HEK293 (cell line): ENCODE measurements at regions of chr15 and their contacts with region 1.

Region 1: DNA sequence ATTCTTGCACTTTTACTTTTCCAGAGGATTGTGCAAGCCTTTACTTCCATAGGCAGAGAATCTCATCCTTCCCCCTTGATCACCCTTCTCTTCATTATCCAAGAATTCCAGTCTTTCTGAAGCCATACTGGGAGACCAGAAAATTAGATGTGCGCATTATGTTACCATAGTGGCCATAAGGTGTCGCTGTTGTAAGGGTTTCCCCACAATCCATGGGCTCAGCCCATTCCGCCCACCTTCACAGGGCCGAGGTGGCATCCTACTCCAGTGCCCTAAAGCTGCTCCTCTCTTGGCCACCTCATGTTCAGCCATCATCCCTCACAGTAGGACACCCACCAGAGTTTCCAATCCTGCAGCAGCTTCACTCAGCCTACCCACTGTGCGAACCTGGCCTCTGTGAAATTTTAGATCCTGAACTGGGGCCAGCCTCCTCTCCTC is 35.0 kb downstream of the CTSH start:
- H3K4me3 ChIP-seq: no peak overlapping the region
- H3K27ac ChIP-seq: no peak overlapping the region
- H3K4me1 ChIP-seq: no peaks in the 10 kb centered on the region
- CTCF ChIP-seq: peak; percentile 58

Region 2: GRCh38 chr15:78822514-78822913 is 87.3 kb before region 1 on chr15:
- CTCF ChIA-PET with region 1: no interaction called
- POLR2A ChIA-PET with region 1: no interaction called
- H3K4me3 ChIP-seq: no peak overlapping the region
- H3K27ac ChIP-seq: no peak overlapping the region
- H3K4me1 ChIP-seq: no peaks in the 10 kb centered on the region
- CTCF ChIP-seq: no peak

Region 3: GRCh38 chr15:78872972-78873792 is 36.6 kb before region 1 on chr15:
- CTCF ChIA-PET with region 1: interaction called, 7 read pairs
- POLR2A ChIA-PET with region 1: interaction called, 10 read pairs
- H3K4me3 ChIP-seq: peak overlapping the region; percentile 79
- H3K27ac ChIP-seq: peak overlapping the region; percentile 100
- H3K4me1 ChIP-seq: peaks cover 18% of the 10 kb centered on the region
- CTCF ChIP-seq: peak; percentile 93

Region 4: GRCh38 chr15:78927077-78927784 is 17.4 kb after region 1 on chr15:
- CTCF ChIA-PET with region 1: interaction called, 24 read pairs
- POLR2A ChIA-PET with region 1: interaction called, 4 read pairs
- H3K4me3 ChIP-seq: no peak overlapping the region
- H3K27ac ChIP-seq: no peak overlapping the region
- H3K4me1 ChIP-seq: no peaks in the 10 kb centered on the region; the same call in 1 of the 2 replicates
- CTCF ChIP-seq: no peak

Region 5: GRCh38 chr15:78979456-78980320 is 69.9 kb after region 1 on chr15:
- CTCF ChIA-PET with region 1: interaction called, 157 read pairs
- POLR2A ChIA-PET with region 1: interaction called, 3 read pairs
- H3K4me3 ChIP-seq: no peak overlapping the region
- H3K27ac ChIP-seq: no peak overlapping the region; the same call in 1 of the 2 replicates
- H3K4me1 ChIP-seq: no peaks in the 10 kb centered on the region
- CTCF ChIP-seq: peak; percentile 59; the same call in 1 of the 2 replicates

Region 6: GRCh38 chr15:79117442-79118204 is 207.8 kb after region 1 on chr15:
- CTCF ChIA-PET with region 1: no interaction called
- POLR2A ChIA-PET with region 1: no interaction called
- H3K4me3 ChIP-seq: no peak overlapping the region
- H3K27ac ChIP-seq: no peak overlapping the region
- H3K4me1 ChIP-seq: no peaks in the 10 kb centered on the region
- CTCF ChIP-seq: no peak

Region 7: GRCh38 chr15:79505956-79506355 is 596.1 kb after region 1 on chr15:
- CTCF ChIA-PET with region 1: no interaction called
- POLR2A ChIA-PET with region 1: no interaction called
- H3K4me3 ChIP-seq: no peak overlapping the region
- H3K27ac ChIP-seq: no peak overlapping the region
- H3K4me1 ChIP-seq: no peaks in the 10 kb centered on the region
- CTCF ChIP-seq: no peak